ENCODE measurements at regions of chrX and their contacts with region 1.

Region 1: GRCh38 chrX:119181491-119181890 is 53.9 kb upstream of the KIAA1210 start:
- DNase-seq: no peak
- H3K4me3 ChIP-seq: no peak overlapping the region
- CTCF ChIP-seq: peak; percentile 20

Region 2: DNA sequence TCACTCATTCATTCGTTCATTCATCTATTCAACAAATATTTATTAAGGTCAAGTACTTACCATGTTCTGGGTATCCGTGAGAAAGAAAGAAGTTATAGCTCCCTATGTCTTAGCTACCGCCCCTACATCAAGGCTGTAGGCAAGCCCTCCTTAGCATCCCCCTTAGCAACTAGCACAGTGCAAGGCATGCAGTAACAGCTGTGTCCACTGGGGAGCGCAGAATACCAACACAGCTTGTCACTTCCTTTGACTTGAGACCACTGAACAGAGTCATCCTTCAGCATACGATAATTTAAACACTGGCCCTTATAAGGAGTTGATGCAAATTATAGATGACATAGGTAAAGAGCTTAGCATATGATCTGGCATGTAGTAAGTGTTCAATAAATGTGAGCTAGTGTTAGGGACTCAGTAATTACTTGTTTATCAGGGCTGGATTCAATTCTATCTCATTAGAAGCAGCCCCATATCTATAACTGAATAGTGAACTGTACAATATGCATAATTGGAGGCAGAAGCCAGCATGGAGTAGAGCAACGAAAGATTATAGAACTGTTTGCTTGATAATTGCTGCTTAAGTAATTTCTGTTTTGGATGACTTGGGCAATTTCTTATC is 62.6 kb before region 1 on chrX:
- in situ Hi-C with region 1: no loop called
- DNase-seq: peak; percentile 28
- H3K4me3 ChIP-seq: no peak overlapping the region
- CTCF ChIP-seq: peak; percentile 86

Region 3: DNA sequence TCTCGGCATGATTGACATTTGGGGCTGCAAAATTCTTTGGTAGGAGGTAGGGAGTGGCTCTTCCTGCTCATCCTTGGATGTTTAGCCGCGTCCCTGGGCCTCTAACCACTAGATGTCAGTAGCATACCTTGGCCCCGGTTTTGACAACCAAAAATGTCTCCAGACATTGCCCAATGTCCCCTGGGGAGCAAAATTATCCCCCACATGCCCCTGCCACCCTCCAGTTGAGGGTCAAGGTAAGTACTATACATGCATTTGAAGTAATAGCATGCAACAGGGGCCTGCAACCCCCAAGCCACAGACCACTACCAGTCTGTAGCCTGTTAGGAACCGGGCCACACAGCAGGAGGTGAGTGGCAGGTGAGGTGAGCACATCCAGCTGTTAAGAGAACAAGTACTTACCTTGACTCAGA is 36.2 kb before region 1 on chrX:
- in situ Hi-C with region 1: loop called (anchors 5 kb)
- DNase-seq: no peak
- H3K4me3 ChIP-seq: no peak overlapping the region
- CTCF ChIP-seq: peak; percentile 56

Region 4: GRCh38 chrX:119288890-119289383 is 107.4 kb after region 1 on chrX:
- in situ Hi-C with region 1: loop called (anchors 5 kb)
- DNase-seq: no peak
- H3K4me3 ChIP-seq: no peak overlapping the region
- CTCF ChIP-seq: no peak

Measured in astrocyte of the cerebellum (primary cell).